ENCODE measurements at regions of chr7 and their contacts with region 1.

Region 1: DNA sequence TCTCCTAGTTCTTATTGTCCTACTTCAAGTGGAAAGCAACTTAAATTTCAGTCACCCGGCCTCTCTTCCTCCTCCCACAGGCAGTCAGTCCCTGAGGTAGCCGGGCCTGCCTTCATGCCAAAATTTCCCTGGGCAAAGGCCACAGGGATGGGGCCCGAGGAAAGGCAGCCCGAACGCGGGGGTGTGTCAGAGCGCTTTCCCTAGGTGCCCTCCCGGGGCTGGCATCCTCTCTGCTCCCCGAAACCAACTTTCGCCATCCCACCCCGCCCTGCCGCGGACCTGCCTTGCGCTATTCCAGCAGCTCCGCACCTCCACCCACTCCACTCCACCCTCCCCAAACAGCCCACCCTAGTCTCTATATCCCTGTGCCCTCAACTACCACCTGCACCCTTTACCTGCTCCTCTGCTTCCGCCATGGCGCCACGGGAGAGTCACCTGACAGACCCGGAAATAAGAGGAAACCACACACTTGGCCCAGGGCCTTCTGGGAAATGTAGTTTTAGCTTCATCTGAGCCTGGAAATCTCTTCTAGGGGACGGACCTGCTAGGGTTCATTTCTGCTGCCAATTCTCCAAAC is at the start of gene VPS41:
- DNase-seq: peak; percentile 87
- ATAC-seq: peak; percentile 98
- H3K4me3 Mint-ChIP-seq: peak within 1 kb of the TSS; percentile 95
- H3K27ac Mint-ChIP-seq: peak within 1 kb of the TSS; percentile 81
- H3K4me1 Mint-ChIP-seq: peaks cover 31% of the 10 kb centered on the region
- H3K27me3 Mint-ChIP-seq: no peaks in the 10 kb centered on the region
- total RNA-seq, gene VPS41: 48.6 to 59.3 TPM

Region 2: DNA sequence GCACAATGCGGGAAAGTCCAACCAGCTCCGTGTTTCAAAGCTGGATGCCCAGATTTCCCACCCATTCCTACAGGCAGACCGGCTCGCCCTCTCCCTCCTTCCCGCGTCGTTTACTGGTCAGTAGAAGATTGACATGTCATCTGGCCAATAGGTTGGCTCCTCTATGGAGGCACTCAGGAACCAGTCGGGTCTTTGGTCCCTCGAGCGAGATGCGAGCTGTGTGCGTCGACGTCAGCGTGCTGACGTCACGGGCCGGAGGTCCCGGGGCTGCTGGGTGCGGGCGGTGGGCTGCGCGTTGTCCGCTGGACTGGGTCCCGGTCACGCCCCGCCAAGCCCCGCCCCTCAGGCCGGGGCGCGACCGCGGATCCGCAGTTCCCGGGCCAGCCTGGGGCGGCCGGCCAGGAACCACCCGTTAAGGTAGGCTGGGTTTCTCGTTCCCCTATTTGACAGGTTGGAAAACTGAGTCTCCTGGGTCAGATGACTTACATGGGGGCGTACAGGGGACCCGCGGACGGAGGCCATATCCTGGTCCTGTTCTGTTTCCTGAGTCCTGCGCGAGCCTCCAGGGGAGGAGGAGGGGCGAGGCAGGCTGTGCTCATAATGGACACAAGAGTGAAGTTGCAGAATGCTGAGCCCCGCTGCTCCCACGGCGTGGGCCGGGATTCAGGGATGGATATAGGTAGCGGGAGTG is 730.7 kb before region 1 on chr7 and contains the start of gene STARD3NL:
- CTCF ChIA-PET with region 1: no interaction called
- POLR2A ChIA-PET with region 1: no interaction called
- intact Hi-C with region 1: loop called in 1 of 2 experiments (anchors 5 kb)
- DNase-seq: peak; percentile 92
- ATAC-seq: peak; percentile 100
- H3K4me3 Mint-ChIP-seq: peak within 1 kb of the TSS; percentile 95
- H3K27ac Mint-ChIP-seq: peak within 1 kb of the TSS; percentile 93
- H3K4me1 Mint-ChIP-seq: peaks cover 37% of the 10 kb centered on the region
- H3K27me3 Mint-ChIP-seq: peaks cover 10% of the 10 kb centered on the region
- total RNA-seq, gene STARD3NL: 27.9 to 30.8 TPM

Region 3: DNA sequence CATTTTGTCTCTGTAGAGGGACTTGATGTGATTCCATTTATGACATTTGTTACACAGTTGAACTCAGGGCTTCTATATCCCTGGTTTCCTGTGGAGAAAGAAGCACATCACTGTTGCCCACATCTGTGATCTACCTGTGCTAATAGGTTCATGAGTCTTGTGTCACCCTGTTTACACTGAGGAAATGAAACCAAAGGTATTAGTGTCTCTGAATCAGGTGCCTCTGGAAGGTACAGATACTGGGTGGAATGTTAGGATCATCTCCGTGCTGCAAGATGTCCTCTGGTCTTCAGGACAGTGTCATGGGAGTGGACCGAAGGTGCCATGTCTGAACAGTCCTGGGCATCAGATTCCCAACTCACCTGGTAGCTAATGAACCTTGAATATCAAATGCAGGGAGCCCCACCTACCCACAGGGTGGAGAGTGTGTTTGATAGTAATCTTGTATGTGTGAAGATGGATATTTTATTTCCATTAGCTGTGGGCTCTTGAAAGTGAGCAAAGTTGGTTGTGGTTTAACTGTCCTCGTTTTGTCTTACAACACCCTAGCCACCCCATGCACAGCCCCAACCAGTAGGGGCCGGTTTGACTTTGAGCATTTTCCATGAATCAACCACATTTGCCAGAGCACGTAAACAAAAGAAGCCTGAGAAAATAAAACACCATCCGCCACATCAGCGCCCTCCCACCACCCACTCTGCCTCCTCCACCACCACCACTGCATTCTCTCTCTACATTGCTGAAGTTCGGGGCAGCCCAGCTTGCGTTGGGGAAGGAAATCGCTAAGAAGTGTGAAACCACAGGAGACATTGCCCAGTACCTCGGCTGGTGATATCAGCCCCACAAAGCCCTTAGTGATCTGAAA is 676.1 kb before region 1 on chr7:
- CTCF ChIA-PET with region 1: no interaction called
- POLR2A ChIA-PET with region 1: no interaction called
- intact Hi-C with region 1: loop called in 1 of 2 experiments (anchors 5 kb)
- DNase-seq: peak; percentile 84
- ATAC-seq: peak; percentile 88
- H3K4me3 Mint-ChIP-seq: peak overlapping the region; percentile 50
- H3K27ac Mint-ChIP-seq: peak overlapping the region; percentile 71
- H3K4me1 Mint-ChIP-seq: peaks cover 39% of the 10 kb centered on the region
- H3K27me3 Mint-ChIP-seq: no peaks in the 10 kb centered on the region

Region 4: DNA sequence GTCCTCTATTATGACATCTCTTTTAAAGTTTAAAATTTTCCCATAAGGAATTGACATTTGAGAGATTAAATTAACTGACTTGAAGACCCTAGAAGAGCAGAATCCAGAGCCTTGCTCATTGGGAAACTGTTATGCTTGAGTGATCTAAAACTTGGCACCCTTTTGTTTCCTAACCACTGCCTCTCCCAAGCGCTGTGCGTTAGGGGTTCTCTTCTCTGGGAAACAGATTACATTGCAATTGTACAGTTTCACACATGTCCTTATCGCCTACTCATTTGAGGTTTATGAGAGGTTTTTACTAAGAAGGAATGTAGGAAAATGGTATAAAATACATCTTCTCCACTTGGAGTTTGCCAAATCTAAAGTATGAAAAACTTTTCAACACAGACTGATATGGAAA is 150.9 kb before region 1 on chr7:
- CTCF ChIA-PET with region 1: no interaction called
- POLR2A ChIA-PET with region 1: no interaction called
- intact Hi-C with region 1: no loop called
- DNase-seq: no peak
- ATAC-seq: no peak
- H3K4me3 Mint-ChIP-seq: no peak overlapping the region
- H3K27ac Mint-ChIP-seq: no peak overlapping the region
- H3K4me1 Mint-ChIP-seq: no peaks in the 10 kb centered on the region
- H3K27me3 Mint-ChIP-seq: no peaks in the 10 kb centered on the region

Region 5: DNA sequence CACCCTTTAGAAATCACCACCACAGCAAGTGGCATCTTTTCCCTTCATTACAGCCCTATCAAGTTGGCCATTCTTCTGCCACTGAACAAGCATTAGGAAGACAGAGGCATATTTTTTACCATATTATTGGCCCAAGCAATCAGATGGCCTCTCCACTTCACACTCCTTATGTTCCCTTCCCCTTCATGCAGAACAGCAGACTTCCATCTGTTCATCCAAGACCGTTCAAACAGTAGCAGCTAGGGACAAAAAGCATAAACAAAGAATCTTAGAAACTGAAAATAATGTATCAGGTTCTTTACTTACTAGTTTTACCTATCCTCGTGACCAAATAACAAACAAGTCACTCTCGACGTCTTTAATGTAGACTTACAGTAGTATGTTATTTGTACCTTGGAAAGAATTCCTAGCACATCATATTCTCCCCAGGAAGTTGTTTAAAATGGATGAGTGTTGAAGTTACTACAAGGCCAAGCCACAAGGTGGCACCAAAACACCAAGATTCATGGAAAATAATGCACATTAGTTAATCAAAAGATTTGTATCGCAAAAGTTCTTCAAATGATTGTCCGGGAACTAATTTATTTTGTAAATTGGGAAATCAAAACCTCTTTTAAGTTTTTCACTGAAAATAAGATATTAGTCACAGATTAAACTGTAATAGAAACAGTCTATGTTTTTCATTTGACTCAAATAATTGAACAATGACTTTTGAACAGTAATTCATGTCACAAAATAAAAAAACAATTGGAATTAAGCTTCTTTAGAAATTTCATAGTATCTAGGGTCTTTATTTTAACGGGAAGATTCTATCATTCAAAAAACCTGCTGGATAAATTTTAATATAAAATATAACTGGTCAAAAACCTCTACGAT is 112.0 kb before region 1 on chr7:
- CTCF ChIA-PET with region 1: no interaction called
- POLR2A ChIA-PET with region 1: no interaction called
- intact Hi-C with region 1: no loop called
- DNase-seq: peak; percentile 65
- ATAC-seq: no peak
- H3K4me3 Mint-ChIP-seq: no peak overlapping the region
- H3K27ac Mint-ChIP-seq: no peak overlapping the region
- H3K4me1 Mint-ChIP-seq: no peaks in the 10 kb centered on the region
- H3K27me3 Mint-ChIP-seq: no peaks in the 10 kb centered on the region

Region 6: GRCh38 chr7:39566023-39566921 is 657.4 kb after region 1 on chr7 and contains the start of gene YAE1:
- CTCF ChIA-PET with region 1: no interaction called
- POLR2A ChIA-PET with region 1: no interaction called
- intact Hi-C with region 1: loop called in 1 of 2 experiments (anchors 1 kb)
- DNase-seq: peak; percentile 89
- ATAC-seq: peak; percentile 95
- H3K4me3 Mint-ChIP-seq: peak within 1 kb of the TSS; percentile 96
- H3K27ac Mint-ChIP-seq: peak within 1 kb of the TSS; percentile 98
- H3K4me1 Mint-ChIP-seq: peaks cover 14% of the 10 kb centered on the region
- H3K27me3 Mint-ChIP-seq: no peaks in the 10 kb centered on the region
- total RNA-seq, gene YAE1: 9.8 to 13.5 TPM

Measured in activated CD4-positive, alpha-beta T cell treated with anti-CD3 and anti-CD28 coated beads for 36 hours (primary cell).